Aorta (tissue), 5 donors: ENCODE measurements at regions of chr7 and their contacts with region 1.

Region 1: DNA sequence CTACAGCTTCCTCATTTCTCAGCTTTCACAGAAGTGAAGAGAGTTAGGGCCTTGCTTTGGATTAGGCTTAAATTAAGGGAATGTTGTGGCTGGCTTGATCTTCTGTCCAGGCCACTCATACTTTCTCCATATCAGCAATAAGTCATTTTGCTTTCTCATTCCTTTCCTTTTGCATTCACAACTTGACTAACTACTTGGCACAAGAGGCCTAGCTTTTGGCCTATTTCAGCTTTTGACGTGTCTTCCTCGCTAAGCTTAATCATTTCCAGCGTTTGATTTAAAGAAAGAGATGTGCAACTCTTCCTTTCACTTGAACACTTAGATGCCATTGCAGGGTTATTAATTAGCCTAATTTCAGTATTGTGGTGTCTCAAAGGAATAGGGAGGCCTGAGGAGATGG is 712.0 kb downstream of the INHBA start:
- DNase-seq: no peak
- ATAC-seq: no peak
- H3K4me3 ChIP-seq: no peak overlapping the region
- H3K27ac ChIP-seq: peak overlapping the region in 1 of 2 donors; percentile 8
- H3K4me1 ChIP-seq: peaks cover 5% of the 10 kb centered on the region in 2 donors
- H3K27me3 ChIP-seq: no peaks in the 10 kb centered on the region

Region 2: DNA sequence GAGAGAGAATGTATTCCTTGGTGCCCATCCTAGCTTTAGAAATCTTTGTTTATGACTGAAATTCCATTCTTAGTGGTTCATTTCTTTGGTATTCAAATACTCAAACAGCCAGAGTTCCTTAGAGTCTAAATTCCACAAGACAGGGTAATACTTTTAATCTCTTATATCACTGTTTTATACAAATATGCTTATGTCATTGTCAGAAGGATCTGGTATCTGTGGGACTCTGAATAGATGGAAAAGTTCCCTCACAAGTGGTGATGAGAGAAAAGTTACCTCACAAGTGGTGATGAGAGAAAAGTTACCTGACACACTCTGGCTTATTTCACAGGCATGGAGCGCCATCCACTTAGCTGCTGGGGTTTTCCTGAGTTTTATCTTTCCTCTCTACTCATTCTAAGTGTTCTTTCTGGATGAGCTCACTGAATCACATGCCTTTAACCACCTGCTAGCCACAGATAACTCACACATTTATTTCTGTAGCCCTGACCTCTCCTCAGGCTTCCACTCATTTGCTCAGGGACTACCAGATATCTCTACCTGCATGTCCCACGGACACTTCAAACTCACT is 72.1 kb before region 1 on chr7:
- intact Hi-C with region 1: loop called in 1 of 2 experiments (anchors 5 kb)
- DNase-seq: no peak
- ATAC-seq: no peak
- H3K4me3 ChIP-seq: no peak overlapping the region
- H3K27ac ChIP-seq: peak overlapping the region in 1 of 2 donors; percentile 81
- H3K4me1 ChIP-seq: peaks cover 0 to 3% of the 10 kb centered on the region in 2 donors
- H3K27me3 ChIP-seq: no peaks in the 10 kb centered on the region

Region 3: GRCh38 chr7:41612798-41613197 is 622.0 kb after region 1 on chr7:
- intact Hi-C with region 1: no loop called
- DNase-seq: no peak
- ATAC-seq: no peak
- H3K4me3 ChIP-seq: no peak overlapping the region
- H3K27ac ChIP-seq: no peak overlapping the region
- H3K4me1 ChIP-seq: no peaks in the 10 kb centered on the region
- H3K27me3 ChIP-seq: no peaks in the 10 kb centered on the region